AG04449 (cell line): ENCODE measurements at regions of chr20 and their contacts with region 1.

Region 1: GRCh38 chr20:32456869-32457478 is 98.8 kb downstream of the ASXL1 start:
- DNase-seq: no peak
- H3K4me3 ChIP-seq: peak overlapping the region; percentile 56
- CTCF ChIP-seq: peak; percentile 92

Region 2: DNA sequence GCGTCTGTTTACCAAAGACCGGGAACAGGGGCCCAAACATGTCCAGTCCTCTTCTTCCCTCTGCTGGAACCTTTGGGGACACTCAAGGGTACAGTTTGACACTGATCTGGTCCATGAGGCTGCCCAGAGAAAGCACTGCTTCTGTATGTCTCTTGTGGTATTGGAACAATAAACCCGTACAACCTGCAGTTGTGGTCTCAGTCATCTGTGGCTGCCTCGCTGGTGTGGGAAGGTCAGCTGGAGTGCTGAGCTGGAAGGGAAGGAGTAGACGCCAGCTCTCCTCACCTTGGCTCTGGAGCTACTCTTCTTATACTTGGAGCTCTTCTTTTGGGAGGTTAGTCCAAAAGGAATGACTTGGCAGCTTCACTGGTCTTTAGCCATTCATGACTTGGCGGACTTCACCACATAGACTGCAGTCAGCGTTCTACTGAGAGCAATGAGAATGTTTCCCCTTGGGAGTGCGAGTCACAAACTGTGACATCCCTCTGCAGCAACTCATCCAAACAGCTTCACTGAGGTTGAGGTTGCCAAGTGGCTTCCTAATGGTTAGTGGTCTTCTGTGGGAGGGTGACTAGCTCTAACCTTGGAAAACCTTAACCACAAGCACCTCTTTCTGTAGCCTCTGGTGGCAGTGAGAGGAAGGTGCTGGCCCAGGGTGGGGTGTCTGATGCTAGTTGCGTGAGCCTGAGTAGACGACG is 17.7 kb before region 1 on chr20:
- CTCF ChIA-PET with region 1: interaction called, 50 read pairs
- POLR2A ChIA-PET with region 1: no interaction called
- DNase-seq: peak; percentile 69
- H3K4me3 ChIP-seq: no peak overlapping the region
- CTCF ChIP-seq: no peak

Region 3: GRCh38 chr20:32445539-32446273 is 11.3 kb before region 1 on chr20:
- CTCF ChIA-PET with region 1: interaction called, 50 read pairs
- POLR2A ChIA-PET with region 1: interaction called, 3 read pairs
- DNase-seq: no peak
- H3K4me3 ChIP-seq: no peak overlapping the region
- CTCF ChIP-seq: no peak

Region 4: DNA sequence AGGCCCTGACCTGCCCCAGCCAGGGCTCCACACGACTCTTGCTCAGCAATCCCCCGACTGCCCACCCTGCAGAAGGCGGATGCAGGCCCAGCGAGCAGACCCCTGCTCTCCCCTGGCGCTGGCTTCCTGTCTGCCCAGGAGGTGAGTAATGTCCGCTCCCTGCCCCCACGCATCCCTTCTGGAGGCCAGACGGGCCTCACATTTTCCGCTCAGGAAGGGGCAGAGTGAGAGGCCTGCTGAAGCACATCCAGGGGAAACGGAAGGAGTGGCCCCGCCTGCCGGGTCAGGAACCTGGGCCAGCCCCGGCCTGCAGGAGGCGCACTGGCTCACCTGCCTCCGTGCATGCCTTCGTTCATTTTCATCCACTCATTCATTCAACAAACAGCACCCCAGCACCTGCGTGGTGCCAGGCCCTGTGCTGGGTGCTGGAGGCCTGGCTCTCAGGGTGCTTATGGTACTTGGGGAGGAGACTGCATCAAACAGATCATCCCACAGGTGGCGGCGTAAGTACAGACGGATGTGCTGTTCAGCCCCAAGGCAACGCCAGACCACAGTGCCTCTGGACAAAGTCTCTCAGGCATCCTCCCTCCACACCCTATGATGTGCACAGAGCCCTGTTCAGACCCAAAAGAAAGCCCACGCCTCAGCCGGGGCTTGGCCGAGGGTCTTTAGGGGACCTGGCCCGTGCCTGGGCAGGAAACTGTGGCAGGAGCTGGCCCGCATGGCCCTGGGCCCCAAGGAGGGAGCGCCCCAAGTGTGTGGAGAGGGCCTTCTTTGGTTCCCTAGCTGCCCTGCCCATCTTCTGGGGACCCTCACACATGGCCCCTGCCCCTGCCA is 13.3 kb after region 1 on chr20:
- CTCF ChIA-PET with region 1: interaction called, 37 read pairs
- POLR2A ChIA-PET with region 1: interaction called, 5 read pairs
- DNase-seq: no peak
- H3K4me3 ChIP-seq: no peak overlapping the region
- CTCF ChIP-seq: peak; percentile 32

Region 5: GRCh38 chr20:32585011-32585518 is 128.1 kb after region 1 on chr20 and contains the start of gene NOL4L:
- CTCF ChIA-PET with region 1: no interaction called
- POLR2A ChIA-PET with region 1: no interaction called
- DNase-seq: no peak
- H3K4me3 ChIP-seq: peak within 1 kb of the TSS; percentile 61
- CTCF ChIP-seq: no peak